BJ (cell line): ENCODE measurements at regions of chr18 and their contacts with region 1.

Region 1: GRCh38 chr18:45664824-45665763 is 49.8 kb downstream of the SLC14A2 start:
- DNase-seq: no peak
- H3K4me3 ChIP-seq: no peak overlapping the region
- H3K27me3 ChIP-seq: no peaks in the 10 kb centered on the region
- CTCF ChIP-seq: peak; percentile 94

Region 2: GRCh38 chr18:45521777-45522176 is 143.3 kb before region 1 on chr18:
- CTCF ChIA-PET with region 1: no interaction called
- POLR2A ChIA-PET with region 1: no interaction called
- DNase-seq: no peak
- H3K4me3 ChIP-seq: no peak overlapping the region
- H3K27me3 ChIP-seq: no peaks in the 10 kb centered on the region
- CTCF ChIP-seq: no peak

Region 3: GRCh38 chr18:45621061-45621511 is 44.0 kb before region 1 on chr18:
- CTCF ChIA-PET with region 1: interaction called, 91 read pairs
- POLR2A ChIA-PET with region 1: no interaction called
- DNase-seq: no peak
- H3K4me3 ChIP-seq: no peak overlapping the region
- H3K27me3 ChIP-seq: peaks cover 5% of the 10 kb centered on the region
- CTCF ChIP-seq: peak; percentile 98

Region 4: GRCh38 chr18:45652303-45653080 is 12.6 kb before region 1 on chr18:
- CTCF ChIA-PET with region 1: interaction called, 10 read pairs
- POLR2A ChIA-PET with region 1: no interaction called
- DNase-seq: no peak
- H3K4me3 ChIP-seq: no peak overlapping the region
- H3K27me3 ChIP-seq: no peaks in the 10 kb centered on the region
- CTCF ChIP-seq: no peak

Region 5: DNA sequence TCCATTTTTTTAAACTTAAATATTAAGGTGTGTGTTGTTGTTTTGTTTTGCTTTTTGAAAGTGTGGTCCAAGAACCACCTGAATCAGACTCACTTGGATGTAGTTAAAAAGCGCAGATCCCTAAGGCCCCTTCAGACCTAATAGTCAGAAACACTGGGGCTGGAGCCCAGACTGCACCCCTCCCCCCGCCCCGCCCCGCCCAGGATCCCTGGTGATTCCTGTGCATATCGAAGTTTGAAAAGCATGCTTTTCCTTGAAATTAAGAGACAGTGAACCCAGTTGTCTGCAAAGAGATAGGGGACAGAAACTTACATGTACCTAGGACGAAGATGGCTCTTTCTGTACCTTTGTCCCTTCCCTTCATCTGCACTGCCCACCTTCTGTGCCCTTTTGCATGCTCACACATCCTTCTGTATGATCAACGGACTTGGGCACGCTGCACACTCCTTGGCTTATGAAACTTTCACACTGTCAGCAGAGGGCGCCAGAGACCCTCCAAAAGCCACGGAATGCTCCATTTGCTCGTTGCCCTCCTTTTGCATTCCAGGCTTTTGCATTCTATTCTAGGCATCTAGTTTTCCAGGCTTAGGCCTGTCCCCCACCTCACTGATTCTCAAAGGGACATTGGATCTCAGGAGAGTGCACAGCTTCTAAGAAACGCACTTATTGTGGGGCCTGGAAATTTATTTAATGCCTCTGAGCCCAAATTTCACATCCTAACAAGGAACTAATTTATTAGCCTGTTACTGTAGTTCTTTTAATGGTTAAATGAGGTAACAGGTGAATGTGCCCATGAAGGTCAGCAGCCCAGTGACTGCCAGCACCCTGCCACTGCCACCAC is 26.1 kb after region 1 on chr18:
- CTCF ChIA-PET with region 1: interaction called, 16 read pairs
- POLR2A ChIA-PET with region 1: no interaction called
- DNase-seq: no peak
- H3K4me3 ChIP-seq: no peak overlapping the region
- H3K27me3 ChIP-seq: no peaks in the 10 kb centered on the region
- CTCF ChIP-seq: peak; percentile 85

Region 6: DNA sequence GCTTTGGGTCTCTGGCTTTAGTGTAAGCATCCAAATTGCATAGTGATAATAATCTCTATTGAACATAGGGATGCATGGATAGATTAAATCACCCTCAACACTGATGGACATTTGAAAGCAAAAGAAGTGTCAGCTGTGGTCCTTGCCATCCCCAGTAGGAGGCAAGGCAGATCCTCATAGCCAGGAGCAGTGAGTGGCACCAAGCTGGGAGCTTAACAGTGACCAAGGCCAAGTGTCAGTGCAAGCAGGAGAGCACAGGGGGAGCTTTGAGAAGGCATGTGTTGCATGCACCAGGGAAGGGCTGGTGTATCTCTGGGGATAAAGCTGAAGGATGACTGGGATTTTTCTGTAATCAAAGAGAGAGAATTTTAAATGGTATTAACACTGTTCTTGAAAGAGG is 73.6 kb after region 1 on chr18:
- CTCF ChIA-PET with region 1: no interaction called
- POLR2A ChIA-PET with region 1: no interaction called
- DNase-seq: no peak
- H3K4me3 ChIP-seq: no peak overlapping the region
- H3K27me3 ChIP-seq: no peaks in the 10 kb centered on the region
- CTCF ChIP-seq: no peak

Region 7: DNA sequence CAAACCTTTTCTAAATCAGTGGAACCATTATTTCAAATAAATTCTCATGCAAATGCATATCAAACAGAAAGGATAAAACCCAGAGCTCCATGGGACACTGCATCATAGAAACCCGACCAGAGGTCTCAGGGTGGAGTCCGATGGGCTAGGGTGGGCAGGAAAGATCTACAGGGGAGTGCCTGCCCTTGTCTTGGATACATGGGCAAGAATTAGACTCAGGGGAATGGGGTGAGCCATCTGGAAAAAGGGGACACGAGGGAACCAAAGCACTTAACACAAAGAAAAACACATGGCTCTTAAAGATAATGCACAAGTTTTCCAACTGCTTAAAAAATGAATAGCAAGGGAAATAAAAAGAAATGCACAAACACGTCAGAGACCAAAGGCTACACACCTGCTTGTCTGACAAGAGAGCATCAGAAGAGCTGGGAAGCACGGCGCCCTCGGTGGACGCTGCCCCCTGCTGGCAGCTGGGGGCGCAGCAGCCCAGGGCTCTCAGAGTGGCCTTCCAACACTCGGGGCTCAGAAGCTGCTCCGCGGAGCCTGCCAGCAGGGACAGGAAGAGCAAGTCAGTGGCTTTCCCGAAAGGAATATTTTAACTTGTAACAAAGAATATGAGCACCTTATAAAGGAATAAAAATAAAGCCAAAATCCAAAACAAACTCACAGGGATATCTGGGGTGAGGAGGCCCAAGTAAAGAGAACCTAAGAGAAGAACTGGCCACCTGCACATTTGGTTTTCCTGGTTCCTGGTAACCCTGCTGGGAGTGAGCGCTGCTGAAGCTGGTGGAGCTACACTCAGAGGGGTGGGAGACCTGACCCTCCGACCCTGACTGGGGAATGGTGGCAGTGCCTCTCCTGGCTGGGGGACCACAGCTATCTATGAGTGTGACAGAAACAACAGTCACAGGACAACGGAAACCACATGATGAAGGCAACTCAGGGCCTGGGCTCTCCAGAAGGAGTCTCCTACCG is 214.9 kb after region 1 on chr18:
- CTCF ChIA-PET with region 1: interaction called, 86 read pairs
- POLR2A ChIA-PET with region 1: no interaction called
- DNase-seq: no peak
- H3K4me3 ChIP-seq: no peak overlapping the region
- H3K27me3 ChIP-seq: no peaks in the 10 kb centered on the region
- CTCF ChIP-seq: peak; percentile 100

Region 8: GRCh38 chr18:45974088-45974536 is 309.0 kb after region 1 on chr18:
- CTCF ChIA-PET with region 1: interaction called, 42 read pairs
- POLR2A ChIA-PET with region 1: no interaction called
- DNase-seq: no peak
- H3K4me3 ChIP-seq: no peak overlapping the region
- H3K27me3 ChIP-seq: no peaks in the 10 kb centered on the region
- CTCF ChIP-seq: peak; percentile 81